Posterior cingulate gyrus (tissue), 11 donors: ENCODE measurements at regions of chr1 and their contacts with region 1.

Region 1: GRCh38 chr1:167819849-167820683 is 93.9 kb downstream of the ADCY10 start:
- DNase-seq: peak; percentile 20 to 94 (median 52)

Region 2: GRCh38 chr1:167936068-167936929 is 116.2 kb after region 1 on chr1 and contains the start of gene DCAF6:
- intact Hi-C with region 1: loop called (anchors 10 kb)
- DNase-seq: peak; percentile 90 to 99 (median 94)